H1 (cell line): ENCODE measurements at regions of chr14 and their contacts with region 1.

Region 1: GRCh38 chr14:75258615-75259466 is 19.8 kb upstream of the FOS start:
- DNase-seq: peak; percentile 98 to 99
- H3K4me3 ChIP-seq: peak overlapping the region; percentile 55 to 74 (median 66)
- H3K27ac ChIP-seq: peak overlapping the region; percentile 98
- H3K4me1 ChIP-seq: peaks cover 0 to 11% (median 4%) of the 10 kb centered on the region in 4 experiments; a peak in 5 of 7 replicates
- H3K27me3 ChIP-seq: no peaks in the 10 kb centered on the region
- CTCF ChIP-seq: no peak; a peak in 1 of 4 replicates
- EP300 ChIP-seq: peak; percentile 70 to 98; a peak in 2 of 3 replicates
- POLR2A ChIP-seq: peak; percentile 57 to 99
- RAD21 ChIP-seq: no peak

Region 2: GRCh38 chr14:75238756-75239455 is 19.9 kb before region 1 on chr14:
- CTCF ChIA-PET with region 1: no interaction called
- POLR2A ChIA-PET with region 1: interaction called, 11 read pairs
- DNase-seq: no peak
- H3K4me3 ChIP-seq: no peak overlapping the region
- H3K27ac ChIP-seq: no peak overlapping the region
- H3K4me1 ChIP-seq: no peaks in the 10 kb centered on the region; a peak in 1 of 7 replicates
- H3K27me3 ChIP-seq: no peaks in the 10 kb centered on the region
- CTCF ChIP-seq: no peak
- EP300 ChIP-seq: no peak
- POLR2A ChIP-seq: no peak
- RAD21 ChIP-seq: no peak

Region 3: GRCh38 chr14:75286313-75286712 is 27.5 kb after region 1 on chr14:
- CTCF ChIA-PET with region 1: interaction called, 4 read pairs
- POLR2A ChIA-PET with region 1: interaction called, 41 read pairs
- DNase-seq: no peak
- H3K4me3 ChIP-seq: no peak overlapping the region
- H3K27ac ChIP-seq: no peak overlapping the region
- H3K4me1 ChIP-seq: peaks cover 2 to 8% (median 3%) of the 10 kb centered on the region in 4 experiments
- H3K27me3 ChIP-seq: no peaks in the 10 kb centered on the region
- CTCF ChIP-seq: no peak
- EP300 ChIP-seq: no peak
- POLR2A ChIP-seq: no peak
- RAD21 ChIP-seq: no peak

Region 4: GRCh38 chr14:75333606-75334548 is 75.0 kb after region 1 on chr14:
- CTCF ChIA-PET with region 1: no interaction called
- POLR2A ChIA-PET with region 1: no interaction called
- DNase-seq: no peak
- H3K4me3 ChIP-seq: no peak overlapping the region
- H3K27ac ChIP-seq: no peak overlapping the region
- H3K4me1 ChIP-seq: no peaks in the 10 kb centered on the region
- H3K27me3 ChIP-seq: no peaks in the 10 kb centered on the region
- CTCF ChIP-seq: no peak
- EP300 ChIP-seq: no peak
- POLR2A ChIP-seq: no peak
- RAD21 ChIP-seq: no peak